ENCODE measurements at regions of chrX and their contacts with region 1.

Region 1: GRCh38 chrX:18961686-18962085 is 22.2 kb downstream of the PHKA2 start:
- DNase-seq: no peak
- ATAC-seq: no peak
- H3K4me3 ChIP-seq: no peak overlapping the region
- H3K27ac ChIP-seq: no peak overlapping the region
- H3K4me1 ChIP-seq: no peaks in the 10 kb centered on the region
- H3K27me3 ChIP-seq: no peaks in the 10 kb centered on the region
- CTCF ChIP-seq: no peak

Region 2: GRCh38 chrX:17511556-17511955 is 1450.1 kb before region 1 on chrX:
- CTCF ChIA-PET with region 1: no interaction called
- POLR2A ChIA-PET with region 1: interaction called, 17 read pairs
- in situ Hi-C with region 1: no loop called
- intact Hi-C with region 1: no loop called
- DNase-seq: no peak
- ATAC-seq: no peak
- H3K4me3 ChIP-seq: no peak overlapping the region
- H3K27ac ChIP-seq: no peak overlapping the region
- H3K4me1 ChIP-seq: no peaks in the 10 kb centered on the region
- H3K27me3 ChIP-seq: no peaks in the 10 kb centered on the region
- CTCF ChIP-seq: no peak